ENCODE measurements at regions of chr2 and their contacts with region 1.

Region 1: GRCh38 chr2:190794377-190794776 is 86.2 kb upstream of the GLS start:
- DNase-seq: no peak
- ATAC-seq: no peak
- H3K4me3 ChIP-seq: no peak overlapping the region
- H3K27ac ChIP-seq: no peak overlapping the region
- H3K4me1 ChIP-seq: peaks cover 20% of the 10 kb centered on the region
- H3K27me3 ChIP-seq: no peaks in the 10 kb centered on the region
- CTCF ChIP-seq: no peak

Region 2: GRCh38 chr2:190947711-190948251 is 153.4 kb after region 1 on chr2:
- CTCF ChIA-PET with region 1: interaction called, 3 read pairs
- POLR2A ChIA-PET with region 1: interaction called, 18 read pairs
- intact Hi-C with region 1: no loop called
- DNase-seq: peak; percentile 66
- ATAC-seq: peak; percentile 74
- H3K4me3 ChIP-seq: peak overlapping the region; percentile 26; the same call in 1 of the 2 replicates
- H3K27ac ChIP-seq: peak overlapping the region; percentile 4; the same call in 1 of the 2 replicates
- H3K4me1 ChIP-seq: peaks cover 28% of the 10 kb centered on the region
- H3K27me3 ChIP-seq: no peaks in the 10 kb centered on the region
- CTCF ChIP-seq: peak; percentile 37; the same call in 1 of the 2 replicates

Region 3: GRCh38 chr2:192413812-192414681 is 1619.7 kb after region 1 on chr2:
- CTCF ChIA-PET with region 1: no interaction called
- POLR2A ChIA-PET with region 1: no interaction called
- intact Hi-C with region 1: no loop called
- DNase-seq: no peak
- ATAC-seq: no peak
- H3K4me3 ChIP-seq: no peak overlapping the region
- H3K27ac ChIP-seq: no peak overlapping the region
- H3K4me1 ChIP-seq: no peaks in the 10 kb centered on the region
- H3K27me3 ChIP-seq: no peaks in the 10 kb centered on the region
- CTCF ChIP-seq: no peak